HAP-1 (cell line): ENCODE measurements at regions of chr5 and their contacts with region 1.

Region 1: GRCh38 chr5:66306105-66306843 is 162.2 kb downstream of the SREK1 start:
- DNase-seq: peak; percentile 60 to 68
- H3K4me3 ChIP-seq: no peak overlapping the region
- H3K4me1 ChIP-seq: no peaks in the 10 kb centered on the region
- H3K27me3 ChIP-seq: no peaks in the 10 kb centered on the region

Region 2: GRCh38 chr5:65961633-65962032 is 344.6 kb before region 1 on chr5:
- in situ Hi-C with region 1: no loop called
- DNase-seq: no peak
- H3K4me3 ChIP-seq: no peak overlapping the region
- H3K4me1 ChIP-seq: peaks cover 2% of the 10 kb centered on the region; the same call in 1 of the 2 replicates
- H3K27me3 ChIP-seq: no peaks in the 10 kb centered on the region

Region 3: DNA sequence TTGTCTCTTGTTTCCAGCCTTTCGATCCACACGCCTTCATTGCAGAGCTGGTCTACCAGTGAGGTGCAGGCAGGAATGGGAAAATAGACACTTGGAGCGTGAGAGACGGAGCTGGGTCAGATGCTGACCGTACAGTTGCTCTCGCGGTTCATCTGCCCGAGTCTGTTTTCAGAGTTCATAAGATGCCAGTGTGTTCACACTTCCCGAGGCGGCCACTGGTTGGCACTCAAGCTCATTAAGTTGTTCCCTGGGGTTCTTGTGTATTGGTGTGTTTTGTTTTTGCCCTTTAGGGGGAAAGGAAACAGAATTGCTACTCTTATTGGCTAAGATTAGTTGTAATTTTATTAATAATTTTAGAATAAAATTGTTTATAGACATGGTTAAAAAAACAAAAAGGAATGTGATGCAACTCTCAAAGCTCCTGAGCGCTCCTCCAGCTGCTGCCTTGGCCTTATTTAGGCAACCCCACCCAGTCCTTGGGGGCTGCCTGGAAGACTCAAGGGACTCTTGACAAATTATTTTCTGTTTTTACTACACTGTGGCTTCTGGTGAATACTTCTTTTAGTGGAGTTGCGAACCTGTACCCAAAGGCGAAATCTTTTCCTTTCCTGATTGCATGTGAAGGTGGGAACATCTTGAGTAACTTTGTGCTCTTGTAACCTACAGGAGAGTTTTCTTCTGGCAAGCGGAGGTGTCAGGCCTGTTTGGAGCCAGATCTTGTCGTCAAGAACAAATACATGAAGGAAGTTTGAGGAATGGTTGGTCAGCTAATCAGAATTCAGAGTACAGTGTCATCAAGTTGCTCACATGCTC is 436.0 kb after region 1 on chr5:
- in situ Hi-C with region 1: loop called (anchors 25 kb)
- DNase-seq: peak in 1 of 2 experiments; percentile 42
- H3K4me3 ChIP-seq: no peak overlapping the region
- H3K4me1 ChIP-seq: no peaks in the 10 kb centered on the region
- H3K27me3 ChIP-seq: peaks cover 16% of the 10 kb centered on the region